Esophagus squamous epithelium (tissue), 5 donors: ENCODE measurements at regions of chr2 and their contacts with region 1.

Region 1: GRCh38 chr2:235595422-235596010 is 101.7 kb downstream of the AGAP1 start:
- DNase-seq: no peak
- H3K4me3 ChIP-seq: no peak overlapping the region
- H3K27ac ChIP-seq: no peak overlapping the region
- H3K4me1 ChIP-seq: peaks cover 0 to 12% (median 3%) of the 10 kb centered on the region in 3 donors
- H3K27me3 ChIP-seq: no peaks in the 10 kb centered on the region
- CTCF ChIP-seq: peak; percentile 66 to 87 (median 82)
- POLR2A ChIP-seq: no peak

Region 2: DNA sequence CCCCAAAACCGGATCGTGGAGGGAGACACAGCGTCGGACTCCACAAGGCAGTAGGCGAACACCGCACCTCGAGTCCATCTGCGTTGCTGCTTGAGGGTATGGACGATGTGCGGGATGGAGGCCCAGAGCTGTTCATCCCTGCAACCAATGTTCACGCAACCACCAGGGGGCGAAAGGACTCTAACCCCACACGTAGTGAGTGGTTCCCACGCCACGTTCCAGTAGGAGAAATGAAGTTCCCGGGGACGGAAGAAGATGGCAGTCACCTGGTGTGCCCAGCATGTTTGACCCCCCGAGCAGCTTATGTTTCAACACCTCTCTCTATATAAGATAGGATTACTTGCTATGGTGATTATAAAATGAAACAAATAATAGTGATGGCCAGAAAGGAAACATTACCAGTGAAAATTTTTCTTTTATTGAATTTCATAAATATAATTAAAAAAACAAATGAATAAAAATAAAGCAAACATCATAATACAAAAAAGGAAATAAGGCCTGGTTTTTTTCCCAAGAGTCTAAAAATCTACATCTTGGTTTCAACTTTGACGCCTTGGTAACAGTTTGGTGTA is 459.4 kb before region 1 on chr2:
- intact Hi-C with region 1: loop called (anchors 5 kb)
- DNase-seq: no peak
- H3K4me3 ChIP-seq: no peak overlapping the region
- H3K27ac ChIP-seq: no peak overlapping the region
- H3K4me1 ChIP-seq: no peaks in the 10 kb centered on the region
- H3K27me3 ChIP-seq: peaks cover 0 to 7% (median 0%) of the 10 kb centered on the region in 4 donors
- CTCF ChIP-seq: peak; percentile 33 to 83 (median 75)
- POLR2A ChIP-seq: no peak

Region 3: DNA sequence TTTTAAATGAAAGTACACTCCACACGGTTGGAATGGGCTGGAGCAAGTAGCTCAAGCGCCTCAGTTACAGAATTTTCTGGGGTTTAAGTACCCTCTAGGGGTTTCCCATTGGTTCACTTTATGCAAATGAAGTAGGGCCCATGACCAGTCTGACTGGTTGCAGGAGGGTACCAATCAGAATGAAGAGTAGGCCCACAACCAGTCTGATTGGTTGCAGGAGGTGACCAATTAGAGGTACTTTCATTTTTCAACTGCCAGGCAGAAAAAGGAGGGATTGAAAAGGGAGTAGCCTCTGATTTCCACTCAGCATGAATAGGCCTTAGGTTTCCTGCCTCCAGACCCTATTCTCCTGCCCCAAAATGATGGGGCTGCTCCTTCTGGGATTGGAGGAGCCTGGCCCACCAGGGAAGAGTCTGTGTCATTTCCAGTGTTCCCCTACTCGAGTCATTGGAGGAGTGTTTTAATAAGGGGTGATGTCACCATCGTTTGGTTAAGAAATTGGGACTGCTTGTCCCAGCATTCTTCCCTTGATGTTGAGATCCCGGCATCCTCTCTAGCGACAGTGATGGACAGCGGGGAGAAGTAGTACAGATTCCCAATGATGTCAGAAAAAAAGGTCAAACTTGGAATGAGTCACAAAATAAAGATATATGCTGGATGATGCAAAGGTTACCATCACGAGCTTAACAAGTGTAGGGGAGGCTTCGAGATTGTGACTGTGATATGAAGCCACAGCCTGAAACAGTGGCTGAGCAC is 433.3 kb before region 1 on chr2:
- intact Hi-C with region 1: no loop called
- DNase-seq: no peak
- H3K4me3 ChIP-seq: no peak overlapping the region
- H3K27ac ChIP-seq: no peak overlapping the region
- H3K4me1 ChIP-seq: no peaks in the 10 kb centered on the region
- H3K27me3 ChIP-seq: peaks cover 0 to 27% (median 0%) of the 10 kb centered on the region in 4 donors
- CTCF ChIP-seq: no peak
- POLR2A ChIP-seq: no peak

Region 4: DNA sequence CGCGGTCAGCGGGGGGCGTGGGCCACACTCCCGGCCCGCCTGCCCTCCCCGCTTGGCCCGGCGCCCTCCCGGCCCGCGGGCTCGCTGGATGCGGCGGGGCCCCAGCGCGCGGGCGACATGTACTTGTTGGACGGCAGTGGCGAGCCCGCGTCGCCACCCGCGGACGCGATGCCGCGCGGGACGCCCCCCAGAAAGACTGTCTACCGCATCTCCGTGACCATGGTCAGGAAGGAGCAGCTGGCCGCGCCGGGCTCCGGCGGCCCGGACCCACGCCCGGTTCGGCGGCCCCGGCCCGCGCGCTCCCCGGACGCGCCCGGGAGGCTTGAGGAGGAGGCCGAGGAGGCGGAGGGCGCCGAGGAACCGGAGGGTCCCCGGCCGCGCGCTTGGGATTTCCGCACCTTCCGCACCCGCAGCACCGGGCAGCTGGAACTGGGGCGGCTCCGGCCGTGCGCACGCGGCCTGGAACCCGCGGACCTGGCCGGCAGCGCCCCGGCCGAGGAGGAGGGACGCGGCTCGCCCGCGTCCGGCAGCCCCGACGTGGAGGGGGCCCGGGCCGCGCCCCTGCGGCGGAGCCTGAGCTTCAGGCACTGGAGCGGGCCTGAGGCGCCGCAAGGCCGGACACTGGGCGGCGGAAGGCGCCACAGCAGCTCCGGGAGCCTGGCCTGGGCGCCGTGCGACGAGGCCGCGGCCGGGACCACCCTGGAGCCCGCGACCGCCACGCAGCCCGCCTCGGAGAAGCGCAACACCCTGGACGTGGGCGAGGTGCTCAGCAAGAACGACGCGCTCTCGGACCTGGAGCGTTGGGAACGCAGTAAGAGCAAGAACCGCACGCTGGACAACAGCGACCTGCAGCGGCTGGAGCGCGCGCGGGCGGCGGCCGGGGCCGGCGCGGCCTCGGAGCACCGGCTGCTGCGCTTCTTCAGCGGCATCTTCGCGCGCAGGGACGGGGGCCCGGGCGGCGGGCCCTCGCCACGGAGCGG is 74.8 kb after region 1 on chr2:
- intact Hi-C with region 1: loop called (anchors 5 kb)
- DNase-seq: no peak
- H3K4me3 ChIP-seq: peak overlapping the region; percentile 45 to 74 (median 56)
- H3K27ac ChIP-seq: peak overlapping the region; percentile 5 to 80 (median 56)
- H3K4me1 ChIP-seq: peaks cover 11 to 45% (median 22%) of the 10 kb centered on the region in 3 donors
- H3K27me3 ChIP-seq: peaks cover 0 to 32% (median 0%) of the 10 kb centered on the region in 4 donors
- CTCF ChIP-seq: peak in 5 of 6 experiments; percentile 22 to 54 (median 37)
- POLR2A ChIP-seq: no peak

Region 5: DNA sequence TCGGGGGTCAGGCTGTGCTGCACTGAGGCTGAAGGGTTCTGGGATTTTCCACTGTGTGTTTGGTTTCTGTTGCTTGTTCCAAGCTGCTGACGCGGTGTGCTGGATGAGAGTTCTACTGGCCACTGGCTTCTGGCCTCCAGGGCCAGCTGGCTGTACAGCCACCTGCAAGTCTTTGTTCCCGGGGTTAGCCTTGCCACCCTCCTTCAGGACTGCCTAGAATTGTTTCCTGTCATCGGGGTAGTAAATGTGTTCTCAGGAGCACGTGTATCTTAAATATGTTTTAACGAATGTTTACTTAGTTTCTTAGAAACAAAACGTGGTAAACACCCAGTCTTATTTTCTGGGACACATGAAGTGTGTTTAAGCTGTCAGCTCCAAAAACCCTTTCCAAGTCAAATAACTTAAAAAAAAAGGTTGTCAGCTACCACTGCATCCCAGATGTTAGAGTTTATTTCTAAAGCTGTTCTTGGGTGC is 129.5 kb after region 1 on chr2:
- intact Hi-C with region 1: no loop called
- DNase-seq: no peak
- H3K4me3 ChIP-seq: no peak overlapping the region
- H3K27ac ChIP-seq: peak overlapping the region in 3 of 4 donors; percentile 28 to 72 (median 58)
- H3K4me1 ChIP-seq: peaks cover 0 to 16% (median 10%) of the 10 kb centered on the region in 3 donors
- H3K27me3 ChIP-seq: no peaks in the 10 kb centered on the region
- CTCF ChIP-seq: no peak
- POLR2A ChIP-seq: no peak

Region 6: GRCh38 chr2:235746257-235747084 is 151.0 kb after region 1 on chr2:
- intact Hi-C with region 1: loop called (anchors 5 kb)
- DNase-seq: no peak
- H3K4me3 ChIP-seq: no peak overlapping the region
- H3K27ac ChIP-seq: peak overlapping the region in 1 of 4 donors; percentile 36
- H3K4me1 ChIP-seq: peaks cover 0 to 29% (median 9%) of the 10 kb centered on the region in 3 donors
- H3K27me3 ChIP-seq: no peaks in the 10 kb centered on the region
- CTCF ChIP-seq: peak; percentile 41 to 84 (median 78)
- POLR2A ChIP-seq: no peak